Naive thymus-derived CD4-positive, alpha-beta T cell (primary cell): ENCODE measurements at regions of chr21 and their contacts with region 1.

Region 1: DNA sequence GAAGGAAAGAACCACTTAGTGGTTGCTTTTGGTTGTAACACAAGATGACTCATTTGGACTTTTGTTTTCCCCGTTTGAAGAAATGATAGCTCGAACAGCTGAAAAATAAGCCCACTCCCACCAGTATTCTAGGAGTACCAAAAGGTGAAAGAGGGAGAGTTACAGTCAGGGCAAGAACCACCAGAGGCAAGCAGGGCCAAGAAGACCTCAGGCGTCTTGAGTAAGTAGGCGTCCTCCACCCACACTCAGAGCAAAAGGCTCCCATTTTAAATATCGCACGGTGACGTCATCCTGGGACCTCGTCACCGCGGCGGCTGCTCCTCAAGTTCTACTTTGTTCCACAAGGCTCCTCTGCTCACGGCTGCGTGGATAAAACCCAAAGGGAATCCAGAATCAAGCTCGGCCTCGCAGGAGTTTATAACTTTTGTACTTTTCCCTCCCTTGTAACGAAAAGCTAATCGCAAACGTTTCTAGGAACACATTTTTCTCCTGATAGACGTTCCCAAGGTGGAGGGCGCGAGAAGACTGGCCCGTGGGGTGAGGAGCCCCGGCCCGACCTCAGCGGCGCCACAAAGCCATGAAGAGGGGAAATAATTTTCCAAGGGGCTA is 1.2 kb downstream of the BTG3 start:
- DNase-seq: peak; percentile 57 to 84 (median 73)
- ATAC-seq: peak; percentile 72
- H3K4me3 ChIP-seq: peak overlapping the region; percentile 83
- H3K4me3 Mint-ChIP-seq: peak overlapping the region; percentile 85 to 98 (median 90)
- H3K27ac ChIP-seq: peak overlapping the region; percentile 72
- H3K27ac Mint-ChIP-seq: peak overlapping the region; percentile 77 to 100 (median 93)
- H3K4me1 ChIP-seq: peaks cover 0 to 7% of the 10 kb centered on the region in 2 donors
- H3K4me1 Mint-ChIP-seq: peaks cover 7 to 65% (median 19%) of the 10 kb centered on the region in 7 donors
- H3K27me3 ChIP-seq: no peaks in the 10 kb centered on the region
- H3K27me3 Mint-ChIP-seq: no peaks in the 10 kb centered on the region

Region 2: GRCh38 chr21:17427831-17428483 is 183.6 kb before region 1 on chr21:
- CTCF ChIA-PET with region 1: no interaction called
- POLR2A ChIA-PET with region 1: no interaction called
- intact Hi-C with region 1: no loop called
- DNase-seq: no peak
- ATAC-seq: no peak
- H3K4me3 ChIP-seq: no peak overlapping the region
- H3K4me3 Mint-ChIP-seq: no peak overlapping the region
- H3K27ac ChIP-seq: no peak overlapping the region
- H3K27ac Mint-ChIP-seq: no peak overlapping the region
- H3K4me1 ChIP-seq: no peaks in the 10 kb centered on the region
- H3K4me1 Mint-ChIP-seq: no peaks in the 10 kb centered on the region
- H3K27me3 ChIP-seq: no peaks in the 10 kb centered on the region
- H3K27me3 Mint-ChIP-seq: peaks cover 0 to 15% (median 7%) of the 10 kb centered on the region in 5 donors

Region 3: DNA sequence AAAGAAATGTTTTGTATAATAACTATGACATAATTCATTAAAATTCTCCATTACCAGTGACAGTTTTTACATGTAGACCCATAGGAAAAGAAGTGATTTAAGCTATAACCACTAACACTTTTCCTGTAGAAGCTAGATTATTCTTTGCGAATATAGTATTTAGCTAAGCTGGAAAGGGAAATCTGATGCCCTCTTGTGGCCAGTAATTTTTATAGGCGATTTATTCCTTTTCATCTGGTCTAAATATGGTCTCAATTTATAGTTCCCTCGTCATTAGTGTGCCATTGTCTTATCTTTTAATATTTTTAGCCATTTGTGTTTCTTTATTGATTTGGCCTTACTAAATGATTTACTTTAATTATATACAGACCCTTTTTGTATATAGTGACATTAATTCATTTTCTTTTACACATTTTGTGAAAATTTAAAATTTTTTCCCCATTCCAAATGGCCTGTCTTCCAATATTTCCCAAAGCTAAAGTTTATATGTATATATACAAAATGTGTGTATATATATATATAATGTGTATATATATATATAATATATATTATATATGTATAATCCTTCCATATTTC is 25.6 kb before region 1 on chr21:
- CTCF ChIA-PET with region 1: interaction called, 5 read pairs
- POLR2A ChIA-PET with region 1: no interaction called
- intact Hi-C with region 1: loop called in 1 of 2 experiments (anchors 1 kb)
- DNase-seq: peak in 7 of 9 donors; percentile 15 to 47 (median 38)
- ATAC-seq: peak; percentile 57
- H3K4me3 ChIP-seq: no peak overlapping the region
- H3K4me3 Mint-ChIP-seq: no peak overlapping the region
- H3K27ac ChIP-seq: no peak overlapping the region
- H3K27ac Mint-ChIP-seq: no peak overlapping the region
- H3K4me1 ChIP-seq: no peaks in the 10 kb centered on the region
- H3K4me1 Mint-ChIP-seq: no peaks in the 10 kb centered on the region
- H3K27me3 ChIP-seq: no peaks in the 10 kb centered on the region
- H3K27me3 Mint-ChIP-seq: no peaks in the 10 kb centered on the region

Region 4: GRCh38 chr21:17597680-17598079 is 13.8 kb before region 1 on chr21:
- CTCF ChIA-PET with region 1: no interaction called
- POLR2A ChIA-PET with region 1: interaction called, 3 read pairs
- intact Hi-C with region 1: loop called (anchors 1 to 2 kb)
- DNase-seq: no peak
- ATAC-seq: no peak
- H3K4me3 ChIP-seq: no peak overlapping the region
- H3K4me3 Mint-ChIP-seq: no peak overlapping the region
- H3K27ac ChIP-seq: no peak overlapping the region
- H3K27ac Mint-ChIP-seq: no peak overlapping the region
- H3K4me1 ChIP-seq: no peaks in the 10 kb centered on the region
- H3K4me1 Mint-ChIP-seq: peaks cover 0 to 19% (median 0%) of the 10 kb centered on the region in 7 donors
- H3K27me3 ChIP-seq: no peaks in the 10 kb centered on the region
- H3K27me3 Mint-ChIP-seq: no peaks in the 10 kb centered on the region